ENCODE measurements at regions of chr10 and their contacts with region 1.

Region 1: DNA sequence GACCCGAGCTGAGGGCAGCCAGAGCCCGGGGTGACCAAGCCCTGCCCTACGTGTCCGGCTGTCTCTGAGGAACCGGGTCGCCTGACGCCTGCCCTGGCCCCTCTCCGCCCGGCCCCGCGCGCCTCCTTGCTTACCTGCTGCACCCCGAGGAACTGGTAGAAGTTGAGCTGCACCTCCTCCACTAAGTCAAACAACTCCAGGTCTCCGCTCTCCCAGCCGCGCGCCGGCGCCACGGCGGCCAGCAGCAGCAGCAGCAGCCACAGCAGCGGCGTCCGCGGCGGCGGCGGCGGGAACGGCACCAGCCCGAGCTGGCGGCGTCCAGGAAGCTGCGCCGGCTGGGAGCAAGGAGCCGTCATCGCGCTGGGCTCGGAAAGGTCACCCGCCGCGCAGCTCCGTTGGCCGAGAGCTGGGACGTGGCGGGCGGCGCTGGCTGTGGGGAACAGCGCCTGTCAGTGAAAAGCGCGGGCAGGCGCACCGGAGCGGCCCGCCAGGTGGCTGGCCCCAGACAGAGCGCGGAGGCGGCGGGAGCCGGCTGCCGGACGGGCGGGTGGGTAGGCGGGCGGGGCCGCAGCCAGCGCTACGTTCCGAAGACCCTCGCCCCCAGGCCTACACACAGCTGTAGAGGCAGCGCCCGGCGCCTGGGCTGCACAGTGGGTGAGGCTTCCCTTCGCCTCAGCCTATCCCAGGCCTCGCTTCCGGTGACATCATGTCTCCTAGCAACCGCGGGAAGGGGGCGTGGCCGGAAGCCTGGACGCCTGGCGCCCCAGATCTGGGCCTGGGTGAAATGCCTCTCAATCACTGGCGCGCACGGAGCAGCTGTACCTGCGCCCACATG is at the start of gene DNAJC1:
- DNase-seq: peak; percentile 97
- ATAC-seq: peak; percentile 96
- H3K4me3 Mint-ChIP-seq: peak within 1 kb of the TSS; percentile 87
- H3K27ac Mint-ChIP-seq: peak within 1 kb of the TSS; percentile 89
- H3K4me1 Mint-ChIP-seq: peaks cover 41% of the 10 kb centered on the region
- H3K27me3 Mint-ChIP-seq: peaks cover 13% of the 10 kb centered on the region
- total RNA-seq, gene DNAJC1: 21.4 to 22.4 TPM

Region 2: GRCh38 chr10:22017283-22018020 is 14.2 kb after region 1 on chr10:
- CTCF ChIA-PET with region 1: interaction called, 12 read pairs
- POLR2A ChIA-PET with region 1: no interaction called
- DNase-seq: no peak
- ATAC-seq: no peak
- H3K4me3 Mint-ChIP-seq: no peak overlapping the region
- H3K27ac Mint-ChIP-seq: no peak overlapping the region
- H3K4me1 Mint-ChIP-seq: peaks cover 5% of the 10 kb centered on the region
- H3K27me3 Mint-ChIP-seq: peaks cover 2% of the 10 kb centered on the region

Region 3: DNA sequence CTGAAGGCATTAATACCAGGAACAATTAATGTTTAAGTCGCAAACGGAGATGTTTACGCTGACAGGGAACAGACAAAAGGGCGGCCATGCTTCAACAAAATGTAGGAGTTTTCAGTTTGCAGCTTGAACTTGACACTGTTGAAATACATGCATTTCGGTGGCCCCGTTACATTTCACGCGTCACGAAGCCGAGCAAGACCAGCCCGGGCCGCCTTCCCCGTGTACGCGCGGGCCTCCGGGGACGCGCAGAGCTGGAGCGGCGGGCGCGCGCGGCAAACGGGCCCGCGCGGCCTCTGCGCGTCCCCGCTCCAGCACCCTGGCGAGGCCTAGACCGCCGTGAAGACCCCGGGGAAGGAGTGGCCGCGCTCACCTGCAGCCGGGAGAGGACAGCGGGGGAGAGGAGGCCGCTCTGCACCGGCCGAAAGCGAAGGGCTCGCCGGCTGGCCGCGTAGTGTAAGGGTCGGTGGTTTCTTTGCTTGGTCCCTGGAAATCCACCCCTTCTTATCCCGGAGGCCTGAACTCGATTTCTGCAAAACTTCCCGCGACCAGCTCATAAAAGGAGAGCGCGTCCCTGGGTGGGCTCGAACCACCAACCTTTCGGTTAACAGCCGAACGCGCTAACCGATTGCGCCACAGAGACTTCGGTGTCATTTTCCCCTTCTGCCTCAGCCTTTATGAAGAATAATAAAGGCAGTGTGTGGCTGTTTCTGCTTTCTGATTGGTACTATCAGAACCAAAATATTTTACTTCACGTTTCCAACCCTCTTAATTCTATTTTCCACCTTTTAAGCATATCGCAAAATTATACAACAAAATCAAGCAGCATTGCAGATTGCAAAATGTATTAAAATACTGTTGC is 225.9 kb after region 1 on chr10:
- CTCF ChIA-PET with region 1: interaction called, 3 read pairs
- POLR2A ChIA-PET with region 1: interaction called, 10 read pairs
- DNase-seq: peak; percentile 89
- ATAC-seq: peak; percentile 87
- H3K4me3 Mint-ChIP-seq: peak overlapping the region; percentile 81
- H3K27ac Mint-ChIP-seq: peak overlapping the region; percentile 94
- H3K4me1 Mint-ChIP-seq: peaks cover 20% of the 10 kb centered on the region
- H3K27me3 Mint-ChIP-seq: peaks cover 25% of the 10 kb centered on the region

Region 4: GRCh38 chr10:22316285-22317120 is 313.2 kb after region 1 on chr10 and contains the start of gene COMMD3:
- CTCF ChIA-PET with region 1: interaction called, 4 read pairs
- POLR2A ChIA-PET with region 1: interaction called, 13 read pairs
- DNase-seq: peak; percentile 84
- ATAC-seq: peak; percentile 79
- H3K4me3 Mint-ChIP-seq: peak within 1 kb of the TSS; percentile 88
- H3K27ac Mint-ChIP-seq: peak within 1 kb of the TSS; percentile 87
- H3K4me1 Mint-ChIP-seq: peaks cover 36% of the 10 kb centered on the region
- H3K27me3 Mint-ChIP-seq: peaks cover 14% of the 10 kb centered on the region
- total RNA-seq, gene COMMD3: 59.7 to 63.3 TPM

Region 5: DNA sequence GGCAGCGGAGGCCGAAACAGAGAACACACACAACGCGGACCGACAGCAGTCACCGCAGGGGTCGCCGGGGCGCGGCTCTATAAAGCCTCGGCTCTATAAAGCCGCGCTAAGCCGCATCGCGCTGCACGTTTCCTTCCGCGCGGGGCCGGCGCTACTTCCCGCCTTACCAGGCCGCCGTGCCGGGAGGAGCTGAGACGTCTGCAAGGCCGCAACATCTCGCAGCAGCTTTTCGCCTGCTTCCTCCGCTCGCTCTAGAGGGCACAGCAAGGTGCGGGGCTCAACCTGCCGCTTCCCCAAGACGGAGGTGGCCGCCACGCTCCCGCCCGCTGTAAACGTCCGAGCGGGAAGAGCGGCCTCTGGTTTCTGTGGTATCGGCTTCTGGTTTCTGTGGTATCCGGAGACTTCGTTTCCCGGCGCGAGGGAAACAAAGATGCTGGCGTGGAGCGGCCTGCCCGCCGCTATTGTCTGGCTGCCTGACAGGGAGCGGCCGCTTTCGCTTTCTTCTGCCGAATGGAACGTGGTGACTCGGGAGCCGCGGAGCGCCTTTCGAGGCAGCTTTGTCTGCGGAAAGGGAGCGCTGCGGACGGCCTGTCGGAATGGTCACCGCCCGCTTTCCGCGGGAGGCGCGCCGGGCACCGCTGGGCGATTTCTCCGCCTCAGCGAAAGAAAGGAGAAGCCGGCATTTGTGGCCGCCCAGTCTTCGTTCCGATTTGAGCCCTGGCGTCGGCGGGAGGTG is 433.8 kb after region 1 on chr10:
- CTCF ChIA-PET with region 1: interaction called, 3 read pairs
- POLR2A ChIA-PET with region 1: interaction called, 17 read pairs
- DNase-seq: peak; percentile 90
- ATAC-seq: peak; percentile 94
- H3K4me3 Mint-ChIP-seq: peak overlapping the region; percentile 89
- H3K27ac Mint-ChIP-seq: peak overlapping the region; percentile 95
- H3K4me1 Mint-ChIP-seq: peaks cover 37% of the 10 kb centered on the region
- H3K27me3 Mint-ChIP-seq: peaks cover 14% of the 10 kb centered on the region